Breast epithelium (tissue), 4 donors: ENCODE measurements at regions of chr1 and their contacts with region 1.

Region 1: DNA sequence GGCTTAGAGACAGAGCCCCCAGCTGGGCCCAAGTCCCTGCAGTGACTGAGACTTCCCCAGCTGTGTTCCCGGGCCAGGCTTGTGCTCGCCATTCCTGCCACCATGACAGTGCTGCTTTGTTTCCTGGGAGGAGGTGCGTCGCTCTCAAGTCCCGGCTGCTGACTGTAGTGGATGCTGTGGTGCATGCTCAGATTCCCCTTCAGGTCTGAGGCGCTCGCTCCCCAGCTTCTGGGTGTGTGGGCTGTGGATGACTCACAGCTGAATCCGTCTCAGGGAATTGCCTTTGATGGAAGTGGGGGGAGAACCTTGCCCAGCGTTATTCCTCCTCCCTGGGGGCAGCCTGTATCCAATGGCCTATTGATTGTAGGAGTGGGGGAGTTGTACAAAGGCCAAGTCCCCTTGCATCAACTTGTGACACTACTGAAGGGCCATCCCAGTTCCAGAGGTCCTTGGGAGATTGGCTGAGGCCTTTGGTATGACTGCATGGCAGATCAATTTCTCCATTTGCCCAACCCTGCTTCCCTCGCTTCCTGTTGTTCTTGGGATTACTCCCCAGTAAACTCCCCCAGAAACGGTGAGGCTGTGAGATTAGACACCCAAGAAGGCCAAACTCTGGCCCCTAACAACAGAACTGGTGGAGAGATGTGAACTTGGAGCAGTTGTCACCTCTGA is 17.8 kb upstream of the POU3F1 start:
- DNase-seq: no peak
- H3K4me3 ChIP-seq: no peak overlapping the region
- H3K27ac ChIP-seq: no peak overlapping the region
- H3K4me1 ChIP-seq: no peaks in the 10 kb centered on the region
- H3K27me3 ChIP-seq: no peaks in the 10 kb centered on the region
- CTCF ChIP-seq: no peak
- POLR2A ChIP-seq: no peak

Region 2: GRCh38 chr1:37425221-37425620 is 639.1 kb before region 1 on chr1:
- intact Hi-C with region 1: loop called (anchors 5 kb)
- DNase-seq: no peak
- H3K4me3 ChIP-seq: no peak overlapping the region
- H3K27ac ChIP-seq: no peak overlapping the region
- H3K4me1 ChIP-seq: no peaks in the 10 kb centered on the region
- H3K27me3 ChIP-seq: peaks cover 0 to 4% of the 10 kb centered on the region in 2 donors
- CTCF ChIP-seq: no peak
- POLR2A ChIP-seq: no peak